SK-N-SH (cell line): ENCODE measurements at regions of chr14 and their contacts with region 1.

Region 1: DNA sequence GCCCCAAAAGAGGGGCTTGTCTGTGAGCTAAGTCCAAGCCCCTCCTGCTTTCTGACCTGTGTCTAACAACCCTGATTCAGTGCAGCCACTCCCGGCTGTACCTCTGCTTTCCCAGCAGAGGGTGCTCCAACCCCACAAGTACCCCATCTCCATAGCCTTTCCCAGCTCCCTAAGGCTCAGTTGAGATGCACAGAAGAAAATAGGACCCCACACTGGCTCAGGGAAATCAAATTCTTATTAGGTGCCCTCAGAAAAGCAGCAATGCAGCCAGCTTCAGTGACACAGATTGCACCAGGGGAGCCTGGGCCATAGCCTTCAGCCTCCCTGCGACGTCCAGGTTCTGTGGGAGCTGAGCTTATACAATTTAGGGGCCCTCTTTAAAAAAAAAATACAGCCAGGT is 49.9 kb downstream of the LRRC74A start:
- DNase-seq: peak; percentile 86
- H3K4me3 ChIP-seq: no peak overlapping the region; a peak in 1 of 4 replicates
- H3K27ac ChIP-seq: no peak overlapping the region
- H3K4me1 ChIP-seq: no peaks in the 10 kb centered on the region
- H3K27me3 ChIP-seq: 0 out of 2 replicates have a peak, but pooled peaks cover 4% of the 10 kb centered on the region
- CTCF ChIP-seq: peak; percentile 97
- EP300 ChIP-seq: no peak
- RAD21 ChIP-seq: peak; percentile 100

Region 2: GRCh38 chr14:76863724-76864407 is 12.2 kb before region 1 on chr14:
- CTCF ChIA-PET with region 1: interaction called, 72 read pairs
- POLR2A ChIA-PET with region 1: no interaction called
- DNase-seq: no peak
- H3K4me3 ChIP-seq: no peak overlapping the region
- H3K27ac ChIP-seq: no peak overlapping the region
- H3K4me1 ChIP-seq: no peaks in the 10 kb centered on the region; a peak in 1 of 4 replicates
- H3K27me3 ChIP-seq: peaks cover 10% of the 10 kb centered on the region
- CTCF ChIP-seq: no peak
- EP300 ChIP-seq: no peak
- RAD21 ChIP-seq: no peak

Region 3: DNA sequence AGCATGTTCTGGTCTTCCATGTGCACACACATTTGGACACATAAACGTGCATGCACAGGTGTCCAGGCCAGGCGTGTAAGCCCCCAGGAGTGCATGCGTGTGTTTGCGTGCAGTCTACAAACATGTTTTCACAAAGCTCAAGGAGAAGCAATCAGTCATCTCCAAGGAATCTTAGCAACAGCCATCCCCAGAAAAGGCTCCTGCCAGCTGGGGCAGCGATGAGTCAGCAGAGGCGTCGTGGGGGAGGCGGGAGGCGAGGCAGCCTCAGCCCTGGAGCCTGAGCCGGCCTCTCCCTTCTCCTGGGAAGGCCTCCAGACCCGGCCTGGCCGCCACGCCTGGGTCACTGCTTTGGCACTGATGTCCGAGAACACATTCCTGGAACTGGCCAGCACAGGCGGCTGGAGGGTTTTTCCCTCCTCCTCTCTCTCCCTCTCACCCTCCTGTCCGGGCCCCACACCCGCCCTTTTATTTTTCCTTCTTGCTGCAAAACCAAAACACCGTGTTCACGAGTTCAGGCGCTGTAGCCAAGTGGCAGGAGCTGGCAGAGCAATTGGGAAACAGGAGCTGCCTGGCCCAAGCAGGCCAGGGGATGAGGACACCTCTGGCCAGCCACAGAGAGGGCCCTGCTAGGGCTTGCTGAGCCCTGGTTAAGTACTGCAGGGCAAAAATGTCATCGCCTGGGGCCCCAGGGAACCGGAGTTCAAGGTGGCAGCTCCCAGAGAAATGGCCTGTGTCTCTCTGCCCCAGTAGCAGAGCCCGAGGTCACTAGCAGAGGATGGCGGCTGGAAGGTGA is 42.9 kb after region 1 on chr14:
- CTCF ChIA-PET with region 1: interaction called, 102 read pairs
- POLR2A ChIA-PET with region 1: no interaction called
- DNase-seq: peak; percentile 74
- H3K4me3 ChIP-seq: peak overlapping the region; percentile 15 to 47; a peak in 3 of 4 replicates
- H3K27ac ChIP-seq: peak overlapping the region; percentile 100
- H3K4me1 ChIP-seq: peaks cover 67 to 73% of the 10 kb centered on the region in 2 experiments
- H3K27me3 ChIP-seq: no peaks in the 10 kb centered on the region
- CTCF ChIP-seq: peak; percentile 22
- EP300 ChIP-seq: peak; percentile 62 to 90; a peak in 3 of 4 replicates
- RAD21 ChIP-seq: peak; percentile 41

Region 4: DNA sequence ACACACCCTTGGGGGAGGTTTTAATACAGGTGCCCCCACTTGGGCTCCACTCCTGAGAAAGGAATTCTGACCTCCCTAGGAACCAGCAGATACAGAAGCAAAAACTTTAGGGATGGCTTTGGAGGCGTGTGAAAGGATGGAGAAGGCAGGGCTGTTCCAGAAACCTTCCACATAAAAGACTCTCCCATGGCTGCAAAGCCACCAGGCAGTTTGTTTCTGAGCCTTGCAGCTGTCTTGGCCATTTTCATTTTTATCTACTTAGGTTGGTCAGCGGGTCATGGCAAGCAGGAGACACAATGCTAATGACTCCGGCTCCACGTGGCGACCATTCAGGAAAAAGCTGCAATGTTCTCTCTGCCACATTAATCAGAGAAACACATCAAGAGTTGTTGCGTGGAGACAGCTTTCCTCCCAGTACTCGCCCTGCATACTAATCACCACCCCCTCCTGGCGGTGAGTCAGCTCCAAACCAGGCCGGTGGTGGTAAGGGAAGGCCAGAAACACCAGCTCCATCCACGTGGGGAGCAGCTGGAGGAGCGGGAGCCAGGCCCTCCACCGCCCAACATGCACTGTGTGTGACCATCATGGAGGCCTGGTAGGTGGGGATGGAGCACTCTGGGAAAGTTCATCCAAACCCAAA is 183.3 kb after region 1 on chr14:
- CTCF ChIA-PET with region 1: interaction called, 764 read pairs
- POLR2A ChIA-PET with region 1: no interaction called
- DNase-seq: no peak
- H3K4me3 ChIP-seq: no peak overlapping the region
- H3K27ac ChIP-seq: peak overlapping the region in 1 of 2 experiments; percentile 32; a peak in 1 of 4 replicates
- H3K4me1 ChIP-seq: peaks cover 3 to 14% of the 10 kb centered on the region in 2 experiments; a peak in 2 of 4 replicates
- H3K27me3 ChIP-seq: no peaks in the 10 kb centered on the region
- CTCF ChIP-seq: peak; percentile 23; the same call in 1 of the 2 replicates
- EP300 ChIP-seq: peak in 1 of 2 experiments; percentile 56; a peak in 1 of 4 replicates
- RAD21 ChIP-seq: no peak

Region 5: DNA sequence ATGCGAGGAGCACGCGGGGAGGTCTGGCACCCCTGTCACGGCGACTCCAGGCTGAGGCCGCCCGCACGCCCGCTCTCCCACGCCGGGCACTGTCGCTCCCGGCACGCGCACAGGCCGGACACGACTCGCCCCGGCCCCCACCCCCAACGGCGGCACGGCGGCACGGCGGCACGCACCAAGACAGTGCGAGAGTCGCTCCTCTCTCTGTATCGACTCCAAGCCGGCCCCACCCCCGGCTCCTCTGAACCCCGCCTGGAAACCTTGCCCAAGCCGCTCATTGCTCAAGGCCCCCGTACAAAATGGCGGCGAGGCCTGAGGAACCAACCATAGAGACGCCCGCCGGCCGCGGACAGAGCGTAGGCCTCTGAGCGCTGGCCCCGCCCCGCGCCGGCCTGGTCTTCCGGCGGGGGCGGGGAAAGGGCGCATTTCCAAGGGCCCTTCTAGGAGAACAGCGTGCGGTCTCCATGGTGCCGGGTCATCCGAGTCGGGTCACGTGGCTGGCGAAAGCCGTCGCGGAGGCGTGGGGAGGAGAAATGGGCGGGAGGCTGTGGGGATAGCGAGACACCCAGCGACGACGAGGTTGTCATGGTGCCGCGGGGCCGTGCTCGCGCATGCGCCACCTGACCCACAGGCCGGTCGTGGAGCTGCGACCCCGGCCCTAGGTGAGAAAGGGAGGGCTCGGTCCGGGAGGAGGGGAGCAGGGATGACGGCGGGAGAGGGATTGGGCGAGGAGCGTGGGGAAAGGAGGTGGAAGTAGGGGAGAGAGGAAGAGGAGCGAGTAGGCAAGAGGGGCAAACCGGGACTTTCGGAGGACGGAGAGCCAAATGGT is 221.8 kb after region 1 on chr14 and contains the start of gene CIPC:
- CTCF ChIA-PET with region 1: interaction called, 309 read pairs
- POLR2A ChIA-PET with region 1: no interaction called
- DNase-seq: peak; percentile 98
- H3K4me3 ChIP-seq: peak within 1 kb of the TSS; percentile 64 to 94
- H3K27ac ChIP-seq: peak within 1 kb of the TSS; percentile 88 to 90
- H3K4me1 ChIP-seq: peaks cover 11 to 16% of the 10 kb centered on the region in 2 experiments
- H3K27me3 ChIP-seq: no peaks in the 10 kb centered on the region
- CTCF ChIP-seq: no peak
- EP300 ChIP-seq: peak; percentile 43 to 67; a peak in 3 of 4 replicates
- RAD21 ChIP-seq: no peak
- polyA plus RNA-seq, gene CIPC: 6.5 and 9.6 TPM in 2 replicates

Region 6: GRCh38 chr14:77139540-77140358 is 263.7 kb after region 1 on chr14:
- CTCF ChIA-PET with region 1: interaction called, 12 read pairs
- POLR2A ChIA-PET with region 1: no interaction called
- DNase-seq: peak; percentile 90
- H3K4me3 ChIP-seq: peak overlapping the region; percentile 50 to 62; a peak in 3 of 4 replicates
- H3K27ac ChIP-seq: no peak overlapping the region
- H3K4me1 ChIP-seq: peaks cover 0 to 29% of the 10 kb centered on the region in 2 experiments; a peak in 3 of 4 replicates
- H3K27me3 ChIP-seq: peaks cover 40% of the 10 kb centered on the region
- CTCF ChIP-seq: peak; percentile 63
- EP300 ChIP-seq: no peak
- RAD21 ChIP-seq: peak; percentile 54